ENCODE measurements at regions of chr22 and their contacts with region 1.

Region 1: DNA sequence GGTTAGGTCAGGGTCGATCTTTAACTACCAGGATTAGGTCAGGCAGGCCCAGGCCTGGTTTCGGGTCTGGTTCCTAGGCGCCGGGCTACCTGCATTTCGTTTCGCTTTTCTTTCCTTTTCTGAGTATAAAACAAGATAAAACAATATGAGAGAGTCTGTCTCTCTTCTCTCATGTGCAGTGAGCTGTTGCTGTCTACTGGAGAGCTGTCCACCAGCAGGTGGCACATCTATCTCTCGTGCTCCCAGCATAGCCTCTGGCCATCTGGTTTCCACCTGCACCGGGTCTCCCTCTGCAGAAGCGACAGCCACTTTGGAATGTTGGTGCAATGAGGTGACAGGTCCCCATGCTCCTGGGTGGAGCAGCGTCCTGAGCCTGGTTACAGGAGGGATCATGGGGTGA is 27.6 kb downstream of the RIBC2 start:
- DNase-seq: peak; percentile 46 to 71
- ATAC-seq: peak; percentile 71 to 76 (median 74)
- H3K4me3 ChIP-seq: no peak overlapping the region
- H3K27ac ChIP-seq: no peak overlapping the region
- H3K4me1 ChIP-seq: no peaks in the 10 kb centered on the region
- H3K27me3 ChIP-seq: no peaks in the 10 kb centered on the region
- CTCF ChIP-seq: peak; percentile 67

Region 2: GRCh38 chr22:45402466-45402985 is 38.6 kb before region 1 on chr22:
- intact Hi-C with region 1: no loop called
- DNase-seq: no peak
- ATAC-seq: no peak
- H3K4me3 ChIP-seq: no peak overlapping the region
- H3K27ac ChIP-seq: no peak overlapping the region
- H3K4me1 ChIP-seq: no peaks in the 10 kb centered on the region
- H3K27me3 ChIP-seq: no peaks in the 10 kb centered on the region
- CTCF ChIP-seq: no peak

Region 3: DNA sequence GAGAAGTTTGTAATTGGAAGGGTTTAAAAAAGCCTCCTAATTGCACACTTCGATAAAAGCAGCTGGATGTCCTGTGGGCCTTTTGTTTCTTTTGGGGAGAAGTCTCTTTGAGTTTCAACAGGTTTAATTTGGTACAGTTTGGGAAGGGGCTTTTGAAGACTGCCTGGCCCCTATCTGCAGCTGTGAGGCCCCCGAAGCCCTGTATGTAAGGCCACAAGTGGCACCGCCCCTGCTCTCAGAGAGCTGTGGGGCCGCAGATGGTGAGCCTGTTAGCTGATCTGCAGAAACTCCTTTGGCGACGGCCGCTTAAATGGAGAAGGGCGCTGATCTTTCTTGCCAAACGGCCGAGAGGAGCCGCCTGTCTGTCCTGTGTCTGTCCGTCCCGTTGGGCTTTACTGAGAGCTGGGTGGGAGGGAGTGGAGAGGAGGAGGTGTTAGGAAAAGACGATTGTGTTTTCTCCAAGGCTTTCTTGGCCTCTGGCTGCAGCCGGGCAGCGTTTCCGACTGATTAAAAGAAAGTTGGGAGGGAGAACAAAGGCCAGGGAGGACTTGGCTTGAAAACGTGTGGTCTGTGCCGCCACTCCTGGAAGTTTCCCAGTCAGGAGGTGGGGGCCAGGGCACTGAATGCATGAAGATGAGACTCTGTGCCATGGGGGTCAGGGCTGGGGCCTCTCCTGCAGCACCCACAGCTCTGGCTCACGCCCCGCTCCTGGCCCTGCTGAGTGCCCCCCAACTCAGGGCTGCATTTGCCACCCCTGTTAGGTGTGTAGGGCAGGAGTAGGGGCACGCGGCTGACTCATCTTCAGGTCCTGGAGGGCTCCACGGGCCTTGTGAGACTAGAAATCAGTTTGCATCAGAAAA is 63.9 kb after region 1 on chr22:
- intact Hi-C with region 1: loop called in 1 of 2 experiments (anchors 5 kb)
- DNase-seq: peak; percentile 48 to 79
- ATAC-seq: peak in 3 of 4 donors; percentile 26 to 63 (median 45)
- H3K4me3 ChIP-seq: peak overlapping the region; percentile 58
- H3K27ac ChIP-seq: no peak overlapping the region
- H3K4me1 ChIP-seq: no peaks in the 10 kb centered on the region
- H3K27me3 ChIP-seq: peaks cover 0 to 55% (median 20%) of the 10 kb centered on the region in 3 donors
- CTCF ChIP-seq: no peak

Region 4: GRCh38 chr22:45553351-45554039 is 112.4 kb after region 1 on chr22:
- intact Hi-C with region 1: loop called (anchors 2 to 5 kb)
- DNase-seq: peak; percentile 76 to 86
- ATAC-seq: peak; percentile 64 to 85 (median 79)
- H3K4me3 ChIP-seq: no peak overlapping the region
- H3K27ac ChIP-seq: peak overlapping the region; percentile 36
- H3K4me1 ChIP-seq: peaks cover 3% of the 10 kb centered on the region
- H3K27me3 ChIP-seq: no peaks in the 10 kb centered on the region
- CTCF ChIP-seq: peak; percentile 91

Region 5: DNA sequence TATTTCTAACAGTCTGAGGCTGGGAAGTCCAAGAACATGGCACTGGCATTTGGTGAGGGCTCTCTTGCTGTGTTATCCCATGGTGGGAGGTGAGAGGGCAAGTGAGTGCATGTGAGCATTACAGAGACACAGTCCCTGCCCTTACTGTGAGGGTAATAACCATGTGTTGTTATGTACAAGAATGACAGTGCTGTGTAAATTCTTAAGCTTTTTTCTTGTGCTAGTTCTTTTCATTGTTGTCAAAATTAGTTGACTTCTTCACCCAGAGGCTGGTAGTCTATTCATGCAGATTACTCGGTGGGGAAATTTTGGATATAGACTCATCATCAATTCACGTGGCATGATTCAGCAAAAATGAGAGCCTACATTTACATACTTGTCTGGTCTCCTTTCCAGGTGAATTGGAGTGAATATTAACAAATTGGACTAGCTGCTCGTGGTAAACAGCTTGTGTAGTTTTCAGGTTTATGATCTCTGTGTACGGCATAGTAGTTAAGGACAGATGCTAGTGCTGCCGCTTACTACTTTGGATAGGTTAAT is 279.8 kb after region 1 on chr22:
- intact Hi-C with region 1: no loop called
- DNase-seq: no peak
- ATAC-seq: peak in 1 of 4 donors; percentile 28
- H3K4me3 ChIP-seq: no peak overlapping the region
- H3K27ac ChIP-seq: no peak overlapping the region
- H3K4me1 ChIP-seq: peaks cover 23% of the 10 kb centered on the region
- H3K27me3 ChIP-seq: no peaks in the 10 kb centered on the region
- CTCF ChIP-seq: no peak

Measured in psoas muscle (tissue), 8 donors.